ENCODE measurements at regions of chr19 and their contacts with region 1.

Region 1: DNA sequence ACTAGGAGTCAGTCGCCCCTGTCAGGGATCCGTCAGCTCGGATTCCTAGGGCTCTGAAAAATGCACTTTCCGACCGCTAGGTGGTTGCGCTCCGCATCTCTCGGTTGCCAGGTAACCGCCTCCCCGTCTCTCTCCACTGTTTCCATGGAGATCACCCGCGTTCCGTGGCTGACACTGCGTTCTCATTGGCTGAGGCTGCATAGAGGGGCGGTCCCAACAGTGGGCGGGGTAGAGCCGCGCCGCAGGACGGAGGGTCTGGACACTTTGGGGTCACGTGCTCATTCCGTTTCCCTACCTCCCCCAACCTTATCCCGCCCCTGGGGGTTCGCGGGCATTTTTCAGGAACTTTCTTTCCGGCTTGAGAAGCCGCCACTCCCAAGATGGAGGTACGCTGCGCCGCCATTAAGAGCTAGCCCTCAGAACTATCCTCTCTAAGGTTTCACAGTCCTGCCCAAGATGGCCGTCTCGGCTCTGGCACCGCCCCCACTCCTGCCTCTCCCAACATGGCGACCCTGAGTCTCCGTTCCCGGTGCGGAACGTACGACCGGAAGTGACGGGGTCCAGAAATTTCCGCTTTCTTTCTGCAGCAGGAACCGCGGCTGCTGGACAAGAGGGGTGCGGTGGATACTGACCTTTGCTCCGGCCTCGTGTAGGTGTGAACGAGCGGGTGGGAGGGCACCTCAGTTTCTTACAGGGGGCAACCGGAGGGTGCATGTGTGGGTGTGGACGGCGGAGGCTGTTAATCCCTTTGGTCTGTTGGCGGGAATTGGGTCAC is at the starts of genes ODAD3 and PRKCSH:
- DNase-seq: peak; percentile 99
- CTCF ChIP-seq: peak; percentile 78

Region 2: DNA sequence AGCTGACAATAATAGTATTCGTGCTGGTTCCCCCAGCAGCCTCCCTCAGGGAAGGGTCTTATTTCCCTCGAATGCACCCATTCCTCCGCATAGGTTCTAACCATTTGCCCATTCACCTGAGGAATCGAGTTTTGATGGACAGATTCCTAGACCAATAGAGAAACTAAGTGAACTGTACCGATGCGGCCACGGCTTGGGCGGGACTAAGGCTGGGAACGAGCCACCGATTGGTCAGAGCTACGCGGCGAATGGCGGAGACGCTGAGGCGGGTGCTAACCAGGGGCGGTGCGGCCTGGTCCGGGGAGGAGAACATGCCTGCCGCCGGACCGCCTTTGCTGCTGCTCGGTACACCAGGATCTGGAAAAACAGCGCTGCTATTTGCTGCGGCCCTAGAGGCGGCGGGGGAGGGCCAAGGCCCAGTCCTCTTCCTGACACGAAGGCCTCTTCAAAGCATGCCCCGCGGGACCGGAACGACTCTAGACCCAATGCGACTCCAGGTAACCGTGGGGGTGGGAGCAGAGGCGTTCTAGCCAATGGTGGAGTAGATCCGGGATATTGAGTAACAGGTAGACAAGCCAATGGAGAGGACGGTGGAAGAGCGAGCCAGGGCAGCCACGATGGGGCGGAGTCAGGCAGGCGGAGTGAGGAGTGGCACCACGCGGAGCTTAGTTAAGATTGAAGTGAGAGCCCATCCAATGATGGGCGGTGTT is 60.7 kb before region 1 on chr19 and contains the start of gene SWSAP1:
- CTCF ChIA-PET with region 1: interaction called, 10 read pairs
- POLR2A ChIA-PET with region 1: no interaction called
- DNase-seq: peak; percentile 98
- CTCF ChIP-seq: no peak

Region 3: DNA sequence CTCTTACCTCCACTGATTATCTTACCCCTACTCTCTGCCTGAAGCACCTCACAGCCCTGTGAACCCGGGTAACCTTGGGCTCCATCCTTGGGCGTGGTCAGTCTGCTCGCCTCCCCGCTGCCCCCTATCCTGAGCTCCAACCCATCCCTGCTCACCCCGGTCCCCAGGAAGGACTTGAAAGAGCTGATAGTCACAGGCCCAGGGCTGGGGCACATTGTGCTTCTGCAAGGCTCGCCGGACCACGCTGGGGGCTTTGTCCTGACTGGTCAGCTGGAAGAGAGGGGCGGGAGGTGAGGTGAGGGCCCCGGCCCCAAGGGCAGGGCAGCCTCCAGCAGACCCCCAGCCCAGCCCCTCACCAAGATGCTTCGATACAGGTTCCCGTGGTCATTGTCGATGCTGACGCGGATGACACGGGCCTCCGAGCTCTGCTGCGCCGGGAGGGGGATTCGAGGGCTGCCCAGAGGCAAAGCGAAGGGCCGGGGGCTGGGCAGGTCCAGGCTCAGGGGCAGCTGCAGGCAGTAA is 38.1 kb before region 1 on chr19:
- CTCF ChIA-PET with region 1: no interaction called
- POLR2A ChIA-PET with region 1: no interaction called
- DNase-seq: peak; percentile 10
- CTCF ChIP-seq: no peak

Region 4: GRCh38 chr19:11422163-11423021 is 12.9 kb before region 1 on chr19:
- CTCF ChIA-PET with region 1: interaction called, 37 read pairs
- POLR2A ChIA-PET with region 1: interaction called, 9 read pairs
- DNase-seq: peak; percentile 91
- CTCF ChIP-seq: no peak

Region 5: DNA sequence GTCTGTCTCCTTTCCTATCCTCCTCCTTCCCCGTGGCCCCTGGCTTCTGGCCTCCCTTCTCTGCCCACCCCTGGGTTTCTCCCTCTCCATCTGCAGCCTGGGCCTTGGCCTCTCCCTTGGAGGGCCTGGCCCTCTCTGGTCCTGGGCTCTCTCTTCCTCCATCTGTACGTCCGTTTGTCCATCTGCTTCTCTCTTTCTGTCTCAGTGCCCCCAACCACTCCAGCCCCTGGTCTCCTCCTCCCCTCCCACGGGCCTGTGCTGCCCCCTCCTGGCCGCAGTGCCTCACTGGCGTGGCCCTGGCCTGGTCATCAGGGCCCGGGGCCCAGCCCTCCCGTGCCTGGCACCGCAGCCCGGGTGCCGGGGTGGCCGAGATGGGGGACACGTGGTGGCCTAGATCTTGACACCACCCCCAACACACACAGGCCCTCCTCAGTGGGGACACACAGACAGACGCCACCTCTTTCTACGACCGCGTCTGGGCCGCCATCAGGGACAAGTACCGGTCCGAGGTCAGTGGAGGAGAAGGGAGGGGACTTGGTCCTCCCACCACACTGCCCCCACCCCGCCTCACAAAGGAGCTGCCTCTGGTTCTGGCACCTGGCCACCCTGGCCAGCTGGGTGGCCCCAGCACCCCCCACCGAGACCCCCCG is 11.5 kb after region 1 on chr19:
- CTCF ChIA-PET with region 1: interaction called, 19 read pairs
- POLR2A ChIA-PET with region 1: no interaction called
- DNase-seq: peak; percentile 70
- CTCF ChIP-seq: peak; percentile 70

Region 6: DNA sequence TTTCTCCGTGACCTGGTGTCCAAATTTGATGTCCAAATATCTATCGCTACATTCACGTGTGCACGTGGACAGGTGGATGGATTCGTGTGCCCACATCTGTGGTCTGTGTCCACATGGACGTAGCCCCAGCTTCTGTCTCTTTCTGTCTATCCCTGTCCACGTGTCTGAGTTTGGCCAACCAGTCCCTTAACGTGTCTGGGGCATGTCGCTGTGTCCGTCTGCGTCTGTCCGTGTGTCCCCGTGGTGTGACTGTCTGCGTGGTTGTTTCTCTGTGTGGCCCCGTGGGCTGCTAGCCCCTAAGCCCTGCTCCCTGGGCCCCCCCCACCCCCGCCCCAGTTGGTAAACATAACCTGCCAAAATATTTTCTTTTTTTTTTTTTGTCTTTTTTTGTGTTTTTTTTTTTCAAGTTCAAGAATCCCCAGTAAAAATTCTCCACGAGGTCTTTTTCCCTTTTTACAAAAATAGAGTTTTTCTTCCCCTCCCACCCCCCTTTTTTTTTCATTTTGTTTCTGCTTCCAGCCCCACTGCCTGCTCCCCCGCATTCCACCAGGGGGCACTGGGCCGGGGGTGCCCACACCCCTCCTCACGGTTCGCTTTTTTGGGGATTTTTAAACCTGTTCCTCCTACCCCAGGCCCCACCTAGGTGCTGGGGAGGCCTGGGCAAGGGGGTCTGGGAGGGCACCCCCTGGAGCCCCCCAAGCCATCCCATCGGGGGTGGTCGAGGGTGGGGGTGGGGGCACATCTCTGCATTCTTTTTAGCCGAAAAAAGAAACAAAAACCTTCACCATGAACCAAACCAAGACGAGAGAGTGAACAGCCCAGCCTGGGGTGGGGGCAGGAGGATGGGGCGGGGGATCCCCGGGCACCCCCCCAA is 18.5 kb after region 1 on chr19:
- CTCF ChIA-PET with region 1: interaction called, 16 read pairs
- POLR2A ChIA-PET with region 1: no interaction called
- DNase-seq: peak; percentile 60
- CTCF ChIP-seq: peak; percentile 50

Region 7: GRCh38 chr19:11465613-11466012 is 30.4 kb after region 1 on chr19:
- CTCF ChIA-PET with region 1: no interaction called
- POLR2A ChIA-PET with region 1: no interaction called
- DNase-seq: no peak
- CTCF ChIP-seq: no peak

Region 8: GRCh38 chr19:11494634-11495285 is 59.5 kb after region 1 on chr19:
- CTCF ChIA-PET with region 1: no interaction called
- POLR2A ChIA-PET with region 1: no interaction called
- DNase-seq: no peak
- CTCF ChIP-seq: no peak

Measured in GM10248 (cell line).